Calu3 (cell line): ENCODE measurements at regions of chr5 and their contacts with region 1.

Region 1: DNA sequence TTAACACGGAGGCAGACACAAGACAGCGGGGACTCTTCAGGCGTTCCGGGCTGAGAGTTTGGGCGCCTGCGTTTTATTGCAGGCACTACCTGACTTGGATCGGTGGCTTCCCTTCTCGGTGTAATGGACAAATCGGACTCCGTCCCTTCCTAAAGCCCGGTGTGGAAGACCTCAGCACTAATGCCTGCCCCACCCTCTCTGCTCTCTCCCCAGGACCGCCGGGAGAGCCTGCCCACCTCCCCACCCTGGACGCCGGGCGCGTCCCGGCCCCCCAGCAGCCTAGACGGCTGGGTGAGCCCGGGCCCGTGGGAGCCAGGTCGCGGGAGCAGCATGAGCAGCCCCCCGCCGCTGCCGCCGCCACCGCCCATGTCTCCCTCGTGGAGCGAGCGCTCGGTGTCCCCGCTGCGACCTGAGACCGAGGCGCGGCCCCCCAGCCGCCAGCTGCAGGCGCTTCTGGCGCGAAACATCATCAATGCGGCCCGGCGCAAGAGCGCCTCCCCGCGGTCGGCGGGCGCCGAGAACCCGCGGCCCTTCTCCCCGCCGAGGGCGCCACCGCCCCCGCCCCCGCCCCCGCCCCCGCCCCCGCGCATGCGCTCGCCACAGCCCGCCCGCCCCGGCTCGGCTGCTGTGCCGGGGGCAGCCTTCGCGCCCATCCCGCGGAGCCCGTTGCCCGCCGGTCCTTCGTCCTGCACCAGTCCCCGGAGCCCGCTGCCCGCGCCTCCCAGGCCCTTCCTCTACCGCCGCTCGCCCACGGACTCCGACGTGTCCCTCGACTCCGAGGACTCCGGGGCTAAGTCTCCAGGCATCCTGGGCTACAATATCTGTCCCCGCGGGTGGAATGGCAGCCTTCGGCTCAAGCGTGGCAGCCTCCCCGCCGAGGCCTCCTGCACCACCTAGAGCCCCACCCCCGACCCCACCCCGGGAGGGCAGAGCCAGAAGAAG is 4.6 kb upstream of the MYOZ3 start:
- DNase-seq: peak; percentile 88
- H3K4me3 Mint-ChIP-seq: peak overlapping the region; percentile 84
- H3K27ac Mint-ChIP-seq: peak overlapping the region; percentile 0
- H3K4me1 Mint-ChIP-seq: no peaks in the 10 kb centered on the region
- H3K27me3 Mint-ChIP-seq: peaks cover 53% of the 10 kb centered on the region
- CTCF ChIP-seq: peak; percentile 94

Region 2: DNA sequence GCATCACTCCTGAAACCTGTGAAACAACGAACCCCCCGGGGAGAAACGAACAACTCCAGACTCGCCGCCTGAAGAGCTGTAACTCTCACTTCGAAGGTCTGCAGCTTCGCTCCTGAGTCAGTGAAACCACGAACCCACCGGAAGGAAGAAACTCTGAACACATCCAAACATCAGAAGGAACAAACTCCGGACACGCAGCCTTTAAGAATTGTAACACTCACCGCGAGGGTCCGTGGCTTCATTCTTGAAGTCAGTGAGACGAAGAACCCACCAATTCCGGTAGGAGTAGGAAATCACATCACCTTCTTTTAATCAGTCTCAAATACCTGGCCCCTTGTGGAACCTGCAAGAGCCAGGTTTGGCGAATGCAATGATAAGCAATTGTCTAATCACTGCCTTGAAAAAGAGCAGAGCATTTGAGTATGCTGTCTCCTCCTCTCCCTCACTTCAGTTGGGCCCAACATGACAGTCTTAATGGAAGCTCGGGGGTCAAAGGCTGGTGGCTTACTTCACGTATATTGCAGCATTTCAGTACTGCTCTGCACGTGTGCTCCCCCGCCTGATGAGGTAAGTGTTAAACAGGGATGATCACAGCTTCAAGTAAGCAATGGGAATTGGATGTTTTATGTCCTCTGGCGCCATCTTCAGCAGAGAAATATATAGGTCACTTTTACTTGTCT is 190.3 kb after region 1 on chr5:
- CTCF ChIA-PET with region 1: no interaction called
- intact Hi-C with region 1: loop called (anchors 5 kb)
- DNase-seq: peak; percentile 53
- H3K4me3 Mint-ChIP-seq: no peak overlapping the region
- H3K27ac Mint-ChIP-seq: no peak overlapping the region
- H3K4me1 Mint-ChIP-seq: no peaks in the 10 kb centered on the region
- H3K27me3 Mint-ChIP-seq: peaks cover 66% of the 10 kb centered on the region
- CTCF ChIP-seq: peak; percentile 50